ENCODE measurements at regions of chr3 and their contacts with region 1.

Region 1: DNA sequence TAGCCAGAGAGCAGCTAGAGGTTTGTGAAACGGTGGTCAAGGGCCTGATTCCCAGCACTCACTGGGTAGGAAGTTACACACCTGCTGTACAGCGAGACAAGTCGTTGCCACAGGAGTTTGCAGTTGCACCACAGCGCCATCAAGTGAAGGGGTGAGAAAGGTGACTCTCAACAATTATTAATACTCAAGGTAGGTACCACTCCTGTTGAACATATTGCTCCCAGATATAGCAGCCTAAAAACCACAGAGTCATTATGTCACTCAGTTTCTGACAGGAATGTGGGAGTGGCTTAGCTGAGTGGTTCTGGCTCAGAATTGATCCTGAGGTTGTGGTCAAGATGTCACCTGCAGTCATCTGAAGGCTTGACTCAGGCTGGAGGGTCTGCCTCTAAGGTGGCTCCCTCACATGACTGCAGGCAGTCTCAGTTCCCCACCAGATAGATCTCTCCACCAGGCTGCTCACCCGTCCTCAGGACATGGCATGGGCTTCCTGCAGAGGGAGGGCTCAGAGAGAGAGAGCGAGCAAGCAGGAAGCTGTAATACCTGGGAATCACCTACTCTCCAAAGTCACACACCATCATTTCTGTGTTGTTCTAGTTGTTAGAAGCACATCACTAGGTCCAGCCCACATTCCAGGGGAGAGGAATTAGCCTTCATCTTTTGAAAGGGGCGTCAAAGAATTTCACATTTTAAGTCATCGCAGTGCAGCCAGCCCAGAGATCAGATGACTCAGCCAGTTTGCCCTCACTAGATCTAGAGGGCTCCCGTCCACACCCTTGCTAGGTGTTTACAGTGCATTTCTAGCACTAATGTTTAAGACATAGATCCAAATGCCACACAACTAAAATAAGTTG is 17.0 kb upstream of the ANO10 start:
- DNase-seq: peak; percentile 30
- H3K4me3 Mint-ChIP-seq: no peak overlapping the region
- H3K27ac Mint-ChIP-seq: no peak overlapping the region
- H3K4me1 Mint-ChIP-seq: peaks cover 7% of the 10 kb centered on the region
- H3K27me3 Mint-ChIP-seq: peaks cover 19% of the 10 kb centered on the region

Region 2: DNA sequence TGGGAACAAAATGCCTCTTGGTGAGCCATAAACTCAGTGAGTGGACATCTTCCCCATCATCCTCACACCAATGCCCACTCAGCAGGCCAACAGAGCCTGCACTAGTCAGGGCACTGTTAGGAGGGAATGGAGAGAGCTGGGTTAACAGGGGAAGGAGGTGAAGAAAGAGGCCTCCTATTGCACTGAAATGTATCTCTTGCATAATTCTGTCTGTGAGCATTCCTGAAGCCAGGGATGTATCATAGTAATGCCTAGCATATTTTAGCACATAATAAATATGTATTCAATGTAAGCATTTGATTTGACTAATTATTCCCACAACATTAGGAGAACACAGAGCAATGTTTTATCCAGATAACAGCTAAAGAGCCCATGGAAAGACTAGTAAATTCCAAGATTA is 98.2 kb before region 1 on chr3:
- intact Hi-C with region 1: loop called (anchors 2 kb)
- DNase-seq: no peak
- H3K4me3 Mint-ChIP-seq: no peak overlapping the region
- H3K27ac Mint-ChIP-seq: no peak overlapping the region
- H3K4me1 Mint-ChIP-seq: no peaks in the 10 kb centered on the region
- H3K27me3 Mint-ChIP-seq: peaks cover 4% of the 10 kb centered on the region